Posterior cingulate gyrus (tissue), 11 donors: ENCODE measurements at regions of chr5 and their contacts with region 1.

Region 1: GRCh38 chr5:144219869-144220268 is 49.2 kb downstream of the KCTD16 start:
- DNase-seq: no peak

Region 2: GRCh38 chr5:143837306-143837848 is 382.5 kb before region 1 on chr5:
- intact Hi-C with region 1: no loop called
- DNase-seq: no peak

Region 3: GRCh38 chr5:145101246-145101645 is 881.4 kb after region 1 on chr5:
- intact Hi-C with region 1: loop called (anchors 10 kb)
- DNase-seq: no peak